ENCODE measurements at regions of chr7 and their contacts with region 1.

Region 1: GRCh38 chr7:74401137-74401859 is 52.4 kb upstream of the GTF2IRD1 start:
- DNase-seq: peak; percentile 41
- ATAC-seq: peak; percentile 91
- H3K4me3 ChIP-seq: no peak overlapping the region
- H3K27ac ChIP-seq: no peak overlapping the region
- H3K4me1 ChIP-seq: no peaks in the 10 kb centered on the region
- H3K27me3 ChIP-seq: no peaks in the 10 kb centered on the region
- CTCF ChIP-seq: peak; percentile 88
- POLR2A ChIP-seq: no peak
- RAD21 ChIP-seq: peak; percentile 88

Region 2: GRCh38 chr7:74068393-74069085 is 332.8 kb before region 1 on chr7:
- CTCF ChIA-PET with region 1: no interaction called
- POLR2A ChIA-PET with region 1: no interaction called
- dilution Hi-C with region 1: no loop called
- in situ Hi-C with region 1: loop called (anchors 5 kb)
- intact Hi-C with region 1: loop called (anchors 2 kb)
- DNase-seq: no peak
- ATAC-seq: no peak
- H3K4me3 ChIP-seq: no peak overlapping the region
- H3K27ac ChIP-seq: no peak overlapping the region
- H3K4me1 ChIP-seq: no peaks in the 10 kb centered on the region
- H3K27me3 ChIP-seq: no peaks in the 10 kb centered on the region
- CTCF ChIP-seq: no peak
- POLR2A ChIP-seq: no peak
- RAD21 ChIP-seq: no peak

Region 3: DNA sequence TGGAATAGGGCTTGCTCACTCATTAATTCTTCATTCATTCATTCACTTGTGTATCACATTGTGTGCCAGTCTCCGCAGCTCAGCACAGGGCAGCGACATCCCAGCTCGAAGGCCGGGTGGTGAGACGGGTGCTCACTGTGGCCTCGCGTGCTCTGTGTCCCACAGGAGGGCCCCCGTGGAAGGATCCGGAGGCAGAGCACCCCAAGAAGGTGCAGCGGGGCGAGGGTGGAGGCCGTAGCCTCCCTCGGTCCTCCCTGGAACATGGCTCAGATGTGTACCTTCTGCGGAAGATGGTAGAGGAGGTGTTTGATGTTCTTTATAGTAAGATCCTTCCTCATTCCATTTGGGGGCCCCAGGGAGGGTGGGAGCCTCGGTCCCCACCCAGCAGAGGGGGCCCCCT is 114.0 kb after region 1 on chr7:
- CTCF ChIA-PET with region 1: no interaction called
- POLR2A ChIA-PET with region 1: interaction called, 14 read pairs
- dilution Hi-C with region 1: no loop called
- in situ Hi-C with region 1: no loop called
- intact Hi-C with region 1: no loop called
- DNase-seq: no peak
- ATAC-seq: no peak
- H3K4me3 ChIP-seq: no peak overlapping the region
- H3K27ac ChIP-seq: no peak overlapping the region
- H3K4me1 ChIP-seq: peaks cover 3% of the 10 kb centered on the region; the same call in 1 of the 2 replicates
- H3K27me3 ChIP-seq: no peaks in the 10 kb centered on the region
- CTCF ChIP-seq: no peak
- POLR2A ChIP-seq: no peak
- RAD21 ChIP-seq: no peak

Region 4: DNA sequence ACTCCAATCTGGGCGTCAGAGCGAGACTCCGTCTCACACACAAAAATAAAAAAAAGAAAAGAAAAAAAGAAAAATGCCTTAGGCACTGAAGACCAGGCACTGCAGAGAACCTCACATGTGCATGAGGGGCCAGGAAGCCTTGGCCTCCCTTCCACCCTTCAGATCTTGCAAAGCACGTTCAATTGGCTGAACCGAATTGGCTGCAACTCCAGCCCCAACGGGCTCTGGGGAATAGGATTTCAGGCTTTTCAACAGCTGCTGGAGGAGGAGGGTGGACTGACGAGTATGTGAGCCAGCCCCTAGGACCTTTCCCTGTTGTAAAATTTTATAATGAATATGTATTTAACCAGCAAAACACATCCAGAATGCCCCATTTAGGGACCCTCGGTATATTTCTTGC is 1576.4 kb after region 1 on chr7:
- CTCF ChIA-PET with region 1: no interaction called
- POLR2A ChIA-PET with region 1: no interaction called
- dilution Hi-C with region 1: no loop called
- in situ Hi-C with region 1: no loop called
- intact Hi-C with region 1: no loop called
- DNase-seq: no peak
- ATAC-seq: no peak; the same call in 1 of the 2 replicates
- H3K4me3 ChIP-seq: no peak overlapping the region
- H3K27ac ChIP-seq: no peak overlapping the region
- H3K4me1 ChIP-seq: no peaks in the 10 kb centered on the region
- H3K27me3 ChIP-seq: no peaks in the 10 kb centered on the region
- CTCF ChIP-seq: no peak
- POLR2A ChIP-seq: no peak
- RAD21 ChIP-seq: no peak

Measured in IMR-90 (cell line).